ENCODE measurements at regions of chr6 and their contacts with region 1.

Region 1: DNA sequence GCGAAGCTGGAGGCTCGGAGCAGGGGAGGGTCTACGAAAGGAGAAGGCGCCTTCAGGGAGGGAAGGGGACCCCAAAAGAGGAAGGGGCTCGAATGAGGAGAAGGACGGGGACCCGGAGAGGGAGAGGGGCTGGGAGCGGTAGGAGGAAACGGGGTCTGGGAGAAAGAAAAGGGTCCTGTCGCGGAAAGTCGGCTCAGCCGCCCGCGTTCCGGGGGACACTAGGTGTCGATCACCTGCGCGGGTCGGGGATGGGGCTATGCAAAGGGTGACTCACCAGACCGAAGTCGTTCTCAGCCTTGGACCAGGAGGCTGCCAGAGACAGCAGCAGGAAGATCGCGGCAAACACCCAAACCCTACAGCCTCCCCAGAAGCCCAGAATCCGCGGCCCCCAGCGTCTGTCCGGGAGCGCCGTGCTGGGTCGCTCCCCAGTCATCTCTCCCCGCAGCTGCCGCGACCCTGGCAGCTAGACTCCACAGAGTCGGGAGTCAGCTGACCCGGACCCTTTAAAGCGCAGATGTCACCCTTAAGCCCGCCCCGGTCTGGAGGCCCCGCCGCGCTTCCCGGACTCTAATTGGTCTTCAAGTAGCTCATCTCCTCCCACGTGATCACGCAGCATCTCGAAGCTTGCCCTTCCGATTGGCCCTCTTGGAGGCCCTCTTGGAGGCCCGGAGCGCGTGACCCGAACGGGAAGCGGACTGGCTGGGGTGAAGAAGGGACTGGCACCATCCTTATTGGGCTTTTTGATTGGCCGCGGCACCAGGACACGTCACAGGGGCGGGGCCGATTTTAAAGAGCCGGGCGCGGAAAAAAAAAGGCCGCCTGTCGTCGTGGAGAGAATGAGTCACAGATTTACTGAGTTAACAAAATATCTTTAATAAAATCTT is at the start of gene NEU1:
- DNase-seq: peak; percentile 87 to 100 (median 99)
- ATAC-seq: peak; percentile 97
- H3K4me3 ChIP-seq: peak within 1 kb of the TSS; percentile 97
- H3K4me3 Mint-ChIP-seq: peak within 1 kb of the TSS; percentile 87 to 96 (median 93)
- H3K27ac ChIP-seq: peak within 1 kb of the TSS; percentile 86
- H3K27ac Mint-ChIP-seq: peak within 1 kb of the TSS; percentile 85 to 97 (median 93)
- H3K4me1 ChIP-seq: peaks cover 8 to 15% of the 10 kb centered on the region in 2 donors
- H3K4me1 Mint-ChIP-seq: peaks cover 14 to 29% (median 20%) of the 10 kb centered on the region in 7 donors
- H3K27me3 ChIP-seq: no peaks in the 10 kb centered on the region
- H3K27me3 Mint-ChIP-seq: peaks cover 0 to 2% (median 0%) of the 10 kb centered on the region in 5 donors
- total RNA-seq, gene NEU1: 18.6 to 35.0 (median 20.1) TPM

Region 2: DNA sequence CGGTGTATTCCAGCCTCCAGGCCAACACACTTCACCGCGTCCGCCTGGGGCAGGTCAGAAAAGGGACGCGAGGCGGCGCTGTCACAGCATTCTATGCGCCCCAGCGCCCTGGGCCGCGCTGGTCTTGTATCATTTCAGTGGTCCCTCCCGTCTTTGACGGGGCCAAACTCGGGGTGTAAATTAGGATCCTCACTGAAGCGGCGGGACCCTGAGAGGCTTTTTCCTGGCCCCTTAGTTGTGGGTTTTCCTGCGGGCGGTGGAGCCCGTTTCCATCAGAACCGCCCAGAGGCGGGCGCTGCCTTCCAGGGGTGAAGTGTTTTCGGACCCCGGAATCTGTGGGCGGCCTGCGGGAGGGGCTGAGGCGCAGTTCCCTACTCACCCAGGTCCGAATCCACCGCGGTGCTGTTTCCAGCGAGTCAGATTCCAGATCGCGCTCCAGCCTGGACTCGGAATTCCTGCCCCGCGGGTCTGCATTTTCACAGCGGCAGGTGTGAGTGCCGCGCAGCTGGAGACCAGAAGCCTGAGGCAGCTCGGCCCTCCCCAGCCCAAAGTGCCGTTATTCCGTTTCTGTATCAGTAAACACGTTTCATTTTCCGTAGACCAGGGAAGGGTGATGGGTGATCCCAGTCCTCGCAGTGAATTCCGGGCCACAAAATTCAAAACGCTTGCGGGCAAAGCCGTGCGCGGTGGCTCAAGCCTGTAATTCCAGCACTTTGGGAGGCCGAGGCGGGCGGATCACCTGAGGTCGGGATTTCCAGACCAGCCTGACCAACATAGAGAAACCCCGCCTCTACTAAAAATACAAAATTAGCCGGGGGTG is 368.5 kb before region 1 on chr6:
- CTCF ChIA-PET with region 1: interaction called, 3 read pairs
- POLR2A ChIA-PET with region 1: no interaction called
- intact Hi-C with region 1: loop called in 1 of 2 experiments (anchors 10 kb)
- DNase-seq: peak; percentile 33 to 78 (median 62)
- ATAC-seq: peak; percentile 65
- H3K4me3 ChIP-seq: peak overlapping the region; percentile 87
- H3K4me3 Mint-ChIP-seq: peak overlapping the region; percentile 78 to 93 (median 88)
- H3K27ac ChIP-seq: peak overlapping the region; percentile 81
- H3K27ac Mint-ChIP-seq: peak overlapping the region; percentile 36 to 98 (median 87)
- H3K4me1 ChIP-seq: peaks cover 17 to 24% of the 10 kb centered on the region in 2 donors
- H3K4me1 Mint-ChIP-seq: peaks cover 41 to 61% (median 50%) of the 10 kb centered on the region in 7 donors
- H3K27me3 ChIP-seq: no peaks in the 10 kb centered on the region
- H3K27me3 Mint-ChIP-seq: no peaks in the 10 kb centered on the region

Region 3: DNA sequence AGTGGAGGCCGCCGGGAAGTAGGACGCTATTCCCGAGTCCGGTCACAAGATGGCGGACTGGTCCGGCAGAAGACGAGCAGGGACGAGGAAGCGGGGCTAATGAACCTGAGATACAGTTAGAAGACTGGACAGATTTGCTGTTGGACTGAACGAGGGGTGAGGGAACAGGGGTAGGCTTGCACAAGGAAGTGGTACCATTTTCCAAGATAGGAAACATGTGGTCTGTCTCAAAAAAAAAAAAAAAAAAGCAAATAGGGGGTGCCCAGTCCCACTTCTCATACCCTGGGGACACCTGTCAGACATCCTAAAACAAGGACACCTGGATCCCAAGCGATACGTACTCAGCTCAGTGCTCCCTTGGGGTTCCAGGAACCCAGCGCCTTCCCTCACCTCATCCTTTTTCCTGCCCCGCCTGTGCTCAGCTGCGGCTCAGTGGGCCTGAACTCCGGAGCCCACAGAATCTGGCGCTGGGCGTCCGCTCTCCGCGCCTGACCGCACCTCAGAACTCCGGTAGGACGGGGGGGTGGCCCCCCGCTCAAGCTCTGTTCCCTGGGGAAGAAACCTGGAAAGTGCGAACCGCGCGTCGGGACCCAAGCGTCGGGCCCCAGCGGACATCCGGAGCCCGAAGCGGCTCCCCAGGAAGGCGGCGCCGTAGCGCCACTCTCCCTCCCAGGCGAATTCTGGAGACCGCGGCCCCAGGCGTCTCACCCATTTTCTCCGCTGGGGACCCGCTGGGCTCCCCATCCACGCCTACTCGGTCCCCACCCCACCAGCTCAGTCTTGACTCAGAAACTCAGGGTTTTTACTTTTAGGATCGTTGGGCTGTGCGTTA is 181.5 kb before region 1 on chr6 and contains the start of gene LY6G5C:
- CTCF ChIA-PET with region 1: no interaction called
- POLR2A ChIA-PET with region 1: no interaction called
- intact Hi-C with region 1: loop called (anchors 1 kb)
- DNase-seq: peak in 8 of 9 donors; percentile 28 to 65 (median 48)
- ATAC-seq: peak; percentile 80
- H3K4me3 ChIP-seq: peak within 1 kb of the TSS; percentile 78
- H3K4me3 Mint-ChIP-seq: peak within 1 kb of the TSS; percentile 86 to 98 (median 90)
- H3K27ac ChIP-seq: peak within 1 kb of the TSS; percentile 68
- H3K27ac Mint-ChIP-seq: peak within 1 kb of the TSS; percentile 60 to 86 (median 68)
- H3K4me1 ChIP-seq: peaks cover 15 to 16% of the 10 kb centered on the region in 2 donors
- H3K4me1 Mint-ChIP-seq: peaks cover 14 to 32% (median 19%) of the 10 kb centered on the region in 7 donors
- H3K27me3 ChIP-seq: no peaks in the 10 kb centered on the region
- H3K27me3 Mint-ChIP-seq: no peaks in the 10 kb centered on the region
- total RNA-seq, gene LY6G5C: 2.4 to 4.3 (median 3.1) TPM

Region 4: GRCh38 chr6:31795616-31796298 is 66.8 kb before region 1 on chr6 and contains the start of gene VARS1:
- CTCF ChIA-PET with region 1: no interaction called
- POLR2A ChIA-PET with region 1: no interaction called
- intact Hi-C with region 1: loop called in 1 of 2 experiments (anchors 1 kb)
- DNase-seq: peak; percentile 75 to 92 (median 85)
- ATAC-seq: peak; percentile 96
- H3K4me3 ChIP-seq: peak within 1 kb of the TSS; percentile 76
- H3K4me3 Mint-ChIP-seq: peak within 1 kb of the TSS; percentile 85 to 99 (median 96)
- H3K27ac ChIP-seq: peak within 1 kb of the TSS; percentile 93
- H3K27ac Mint-ChIP-seq: peak within 1 kb of the TSS; percentile 80 to 99 (median 98)
- H3K4me1 ChIP-seq: peaks cover 24 to 32% of the 10 kb centered on the region in 2 donors
- H3K4me1 Mint-ChIP-seq: peaks cover 12 to 55% (median 36%) of the 10 kb centered on the region in 7 donors
- H3K27me3 ChIP-seq: no peaks in the 10 kb centered on the region
- H3K27me3 Mint-ChIP-seq: no peaks in the 10 kb centered on the region
- total RNA-seq, gene VARS1: 34.3 to 84.2 (median 53.2) TPM

Region 5: GRCh38 chr6:31901953-31902643 is 39.5 kb after region 1 on chr6 and contains the start of gene ZBTB12:
- CTCF ChIA-PET with region 1: interaction called, 4 read pairs
- POLR2A ChIA-PET with region 1: interaction called, 13 read pairs
- intact Hi-C with region 1: loop called (anchors 1 kb)
- DNase-seq: peak; percentile 76 to 90 (median 84)
- ATAC-seq: peak; percentile 76
- H3K4me3 ChIP-seq: peak within 1 kb of the TSS; percentile 80
- H3K4me3 Mint-ChIP-seq: peak within 1 kb of the TSS; percentile 81 to 96 (median 88)
- H3K27ac ChIP-seq: peak within 1 kb of the TSS; percentile 83
- H3K27ac Mint-ChIP-seq: peak within 1 kb of the TSS; percentile 75 to 94 (median 86)
- H3K4me1 ChIP-seq: peaks cover 12 to 16% of the 10 kb centered on the region in 2 donors
- H3K4me1 Mint-ChIP-seq: peaks cover 18 to 34% (median 32%) of the 10 kb centered on the region in 7 donors
- H3K27me3 ChIP-seq: no peaks in the 10 kb centered on the region
- H3K27me3 Mint-ChIP-seq: peaks cover 0 to 11% (median 0%) of the 10 kb centered on the region in 5 donors
- total RNA-seq, gene ZBTB12: 0.77 to 4.5 (median 2.5) TPM

Region 6: DNA sequence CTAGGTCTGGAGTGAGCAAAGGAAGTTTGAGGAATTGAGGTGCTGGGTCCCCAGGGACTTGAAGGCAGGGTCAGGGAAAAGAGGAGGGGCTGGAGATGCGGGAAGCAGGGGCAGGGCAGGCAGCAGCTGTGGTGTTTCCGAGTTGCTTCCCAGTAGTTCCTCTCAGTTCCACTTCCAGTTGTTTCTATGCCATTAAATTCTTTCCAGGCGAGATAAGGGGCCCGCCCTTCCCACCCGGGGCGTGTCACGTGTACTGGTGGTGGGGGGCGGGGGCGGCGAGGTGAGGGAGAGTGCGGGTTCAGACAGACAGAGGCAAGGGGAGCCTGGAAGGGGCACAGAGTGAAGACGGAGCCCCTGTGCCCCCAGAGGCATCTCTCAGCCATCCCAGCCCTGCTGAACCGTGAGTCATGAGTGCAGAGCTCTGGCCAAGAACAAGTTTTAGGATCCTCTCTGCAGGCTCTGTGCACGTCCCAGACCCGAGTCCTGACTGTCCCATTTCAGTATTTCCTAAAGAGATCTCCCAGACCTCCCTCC is 245.6 kb after region 1 on chr6:
- CTCF ChIA-PET with region 1: no interaction called
- POLR2A ChIA-PET with region 1: no interaction called
- intact Hi-C with region 1: no loop called
- DNase-seq: no peak
- ATAC-seq: peak; percentile 20
- H3K4me3 ChIP-seq: no peak overlapping the region
- H3K4me3 Mint-ChIP-seq: peak overlapping the region in 5 of 10 donors; percentile 24 to 74 (median 69)
- H3K27ac ChIP-seq: no peak overlapping the region
- H3K27ac Mint-ChIP-seq: peak overlapping the region in 5 of 9 donors; percentile 32 to 91 (median 63)
- H3K4me1 ChIP-seq: peaks cover 0 to 9% of the 10 kb centered on the region in 2 donors
- H3K4me1 Mint-ChIP-seq: peaks cover 2 to 35% (median 28%) of the 10 kb centered on the region in 7 donors
- H3K27me3 ChIP-seq: no peaks in the 10 kb centered on the region
- H3K27me3 Mint-ChIP-seq: peaks cover 0 to 39% (median 6%) of the 10 kb centered on the region in 5 donors

Measured in naive thymus-derived CD4-positive, alpha-beta T cell (primary cell).